B cell (primary cell): ENCODE measurements at regions of chr6 and their contacts with region 1.

Region 1: DNA sequence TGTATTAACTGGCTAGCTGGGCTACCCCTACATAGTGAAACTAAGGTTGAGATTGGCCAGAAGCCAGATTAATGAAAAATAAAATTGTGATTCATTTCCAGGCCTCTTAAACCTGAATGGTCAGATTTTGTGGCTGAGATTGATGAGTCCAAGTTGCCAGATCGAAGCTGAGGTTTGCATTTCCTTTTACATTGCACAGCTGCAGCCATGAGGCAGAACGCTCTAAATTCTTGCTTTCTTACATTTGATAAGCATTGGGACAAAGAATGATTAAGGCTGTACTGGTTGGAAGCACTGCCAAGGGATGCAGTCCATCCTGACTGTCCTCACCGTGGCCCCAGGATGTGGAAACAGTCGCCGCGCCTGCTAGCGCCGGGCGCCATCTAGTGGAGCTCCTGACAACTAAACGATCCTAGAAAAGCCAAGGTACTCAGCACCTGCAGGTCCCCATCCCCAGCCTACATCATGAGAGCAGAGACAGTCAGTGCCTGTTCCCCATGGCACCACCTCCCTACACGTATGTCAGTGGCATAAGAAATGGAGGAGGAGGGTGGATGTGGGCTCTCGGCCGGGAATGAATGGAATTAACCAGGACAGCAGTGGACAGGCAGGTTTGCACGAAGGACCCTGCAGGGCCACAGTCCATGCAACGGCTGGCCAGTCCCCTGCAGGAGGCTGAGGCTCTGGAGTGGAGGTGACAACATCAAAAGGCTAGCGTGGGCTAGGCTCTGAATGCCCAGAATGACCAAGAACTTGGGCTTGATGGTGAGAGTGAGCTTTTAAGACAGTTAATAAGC is 19.0 kb downstream of the PXDC1 start:
- DNase-seq: peak; percentile 72
- ATAC-seq: peak; percentile 67
- H3K4me3 ChIP-seq: no peak overlapping the region
- H3K4me3 Mint-ChIP-seq: no peak overlapping the region
- H3K27ac ChIP-seq: no peak overlapping the region
- H3K27ac Mint-ChIP-seq: no peak overlapping the region
- H3K4me1 ChIP-seq: no peaks in the 10 kb centered on the region
- H3K4me1 Mint-ChIP-seq: peaks cover 2% of the 10 kb centered on the region
- H3K27me3 ChIP-seq: no peaks in the 10 kb centered on the region
- H3K27me3 Mint-ChIP-seq: no peaks in the 10 kb centered on the region
- CTCF ChIP-seq: peak; percentile 82

Region 2: DNA sequence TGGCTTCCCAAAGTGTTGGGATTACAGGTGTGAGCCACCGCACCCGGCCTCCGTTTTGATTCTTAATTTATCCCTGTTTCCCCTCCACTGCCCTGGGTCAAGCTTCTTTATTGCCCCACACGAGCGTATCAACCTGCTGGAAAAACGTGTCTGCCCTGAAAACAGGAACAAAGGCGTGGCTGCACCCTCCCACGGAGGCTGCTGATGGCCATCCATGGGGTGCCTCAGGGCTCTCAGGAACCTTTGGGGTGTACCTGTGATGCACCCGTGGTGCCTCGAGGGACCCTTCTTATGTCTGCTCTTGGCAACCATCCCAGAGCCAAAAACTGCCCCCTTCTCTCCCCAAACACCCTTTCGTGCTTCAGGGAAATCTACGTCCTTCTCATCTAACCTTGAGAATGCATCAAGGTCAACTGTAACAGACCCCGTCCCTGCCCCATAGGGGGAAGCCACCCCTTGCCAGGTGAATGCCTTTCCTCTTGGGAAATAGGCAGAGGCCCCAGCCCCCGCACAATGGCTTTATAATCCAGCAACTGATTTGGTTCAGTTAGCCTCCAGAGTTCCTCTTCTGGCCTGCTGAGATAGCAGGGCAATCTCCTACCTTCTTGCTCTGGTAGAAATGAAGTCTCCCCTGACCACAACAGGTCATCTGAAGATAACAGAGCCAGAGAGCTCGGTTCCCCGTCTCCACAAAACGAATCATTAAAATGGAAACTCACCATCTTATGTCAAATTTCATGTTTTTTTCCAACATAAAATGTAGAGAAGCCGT is 444.4 kb before region 1 on chr6:
- CTCF ChIA-PET with region 1: interaction called, 269 read pairs
- POLR2A ChIA-PET with region 1: no interaction called
- intact Hi-C with region 1: no loop called
- DNase-seq: no peak
- ATAC-seq: no peak
- H3K4me3 ChIP-seq: no peak overlapping the region
- H3K4me3 Mint-ChIP-seq: no peak overlapping the region
- H3K27ac ChIP-seq: no peak overlapping the region
- H3K27ac Mint-ChIP-seq: no peak overlapping the region
- H3K4me1 ChIP-seq: no peaks in the 10 kb centered on the region
- H3K4me1 Mint-ChIP-seq: no peaks in the 10 kb centered on the region
- H3K27me3 ChIP-seq: no peaks in the 10 kb centered on the region
- H3K27me3 Mint-ChIP-seq: no peaks in the 10 kb centered on the region
- CTCF ChIP-seq: no peak

Region 3: DNA sequence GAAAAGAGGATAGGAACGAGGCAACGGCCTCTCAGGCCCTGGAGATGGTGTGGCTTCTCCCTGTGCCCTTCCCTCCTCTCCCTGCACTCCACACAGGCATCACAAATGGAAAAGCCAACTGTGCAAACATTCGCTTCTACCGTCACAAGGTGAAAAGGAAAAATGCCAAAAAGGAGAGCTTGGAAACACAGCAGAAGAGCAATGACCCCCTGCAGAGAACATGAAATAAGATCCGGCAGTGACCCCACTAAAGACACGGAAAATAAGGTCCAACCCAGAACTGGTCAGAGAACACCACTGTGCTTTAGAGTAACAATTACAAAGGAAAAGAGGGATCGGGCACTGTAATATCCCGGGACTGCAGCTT is 338.7 kb before region 1 on chr6:
- CTCF ChIA-PET with region 1: no interaction called
- POLR2A ChIA-PET with region 1: no interaction called
- intact Hi-C with region 1: no loop called
- DNase-seq: no peak
- ATAC-seq: no peak
- H3K4me3 ChIP-seq: no peak overlapping the region
- H3K4me3 Mint-ChIP-seq: no peak overlapping the region
- H3K27ac ChIP-seq: no peak overlapping the region
- H3K27ac Mint-ChIP-seq: no peak overlapping the region
- H3K4me1 ChIP-seq: peaks cover 5 to 7% of the 10 kb centered on the region in 2 donors
- H3K4me1 Mint-ChIP-seq: peaks cover 8% of the 10 kb centered on the region
- H3K27me3 ChIP-seq: no peaks in the 10 kb centered on the region
- H3K27me3 Mint-ChIP-seq: no peaks in the 10 kb centered on the region
- CTCF ChIP-seq: no peak

Region 4: GRCh38 chr6:3410385-3411360 is 321.9 kb before region 1 on chr6:
- CTCF ChIA-PET with region 1: interaction called, 5 read pairs
- POLR2A ChIA-PET with region 1: no interaction called
- intact Hi-C with region 1: loop called (anchors 1 kb)
- DNase-seq: peak; percentile 61
- ATAC-seq: no peak
- H3K4me3 ChIP-seq: no peak overlapping the region
- H3K4me3 Mint-ChIP-seq: no peak overlapping the region
- H3K27ac ChIP-seq: no peak overlapping the region
- H3K27ac Mint-ChIP-seq: no peak overlapping the region
- H3K4me1 ChIP-seq: peaks cover 0 to 5% of the 10 kb centered on the region in 2 donors
- H3K4me1 Mint-ChIP-seq: peaks cover 6% of the 10 kb centered on the region
- H3K27me3 ChIP-seq: no peaks in the 10 kb centered on the region
- H3K27me3 Mint-ChIP-seq: peaks cover 8% of the 10 kb centered on the region
- CTCF ChIP-seq: peak; percentile 65